ENCODE measurements at regions of chr11 and their contacts with region 1.

Region 1: GRCh38 chr11:10455637-10456487 is 798 bp downstream of the AMPD3 start:
- DNase-seq: peak; percentile 92
- H3K4me3 Mint-ChIP-seq: peak overlapping the region; percentile 96
- H3K27ac Mint-ChIP-seq: peak overlapping the region; percentile 94
- H3K4me1 Mint-ChIP-seq: peaks cover 69% of the 10 kb centered on the region
- H3K27me3 Mint-ChIP-seq: peaks cover 8% of the 10 kb centered on the region

Region 2: GRCh38 chr11:9601037-9601875 is 854.6 kb before region 1 on chr11:
- intact Hi-C with region 1: loop called (anchors 5 kb)
- DNase-seq: peak; percentile 92
- H3K4me3 Mint-ChIP-seq: peak overlapping the region; percentile 83
- H3K27ac Mint-ChIP-seq: peak overlapping the region; percentile 88
- H3K4me1 Mint-ChIP-seq: peaks cover 30% of the 10 kb centered on the region
- H3K27me3 Mint-ChIP-seq: peaks cover 7% of the 10 kb centered on the region

Region 3: GRCh38 chr11:10293423-10294289 is 162.2 kb before region 1 on chr11 and contains the start of gene SBF2:
- intact Hi-C with region 1: loop called (anchors 5 kb)
- DNase-seq: peak; percentile 93
- H3K4me3 Mint-ChIP-seq: peak within 1 kb of the TSS; percentile 82
- H3K27ac Mint-ChIP-seq: peak within 1 kb of the TSS; percentile 76
- H3K4me1 Mint-ChIP-seq: peaks cover 33% of the 10 kb centered on the region
- H3K27me3 Mint-ChIP-seq: peaks cover 51% of the 10 kb centered on the region
- total RNA-seq, gene SBF2: 7.1 and 9.1 TPM in 2 replicates

Region 4: GRCh38 chr11:10441652-10442503 is 14.0 kb before region 1 on chr11:
- intact Hi-C with region 1: loop called (anchors 1 kb)
- DNase-seq: peak; percentile 78
- H3K4me3 Mint-ChIP-seq: peak overlapping the region; percentile 51
- H3K27ac Mint-ChIP-seq: peak overlapping the region; percentile 73
- H3K4me1 Mint-ChIP-seq: peaks cover 28% of the 10 kb centered on the region
- H3K27me3 Mint-ChIP-seq: peaks cover 16% of the 10 kb centered on the region

Region 5: DNA sequence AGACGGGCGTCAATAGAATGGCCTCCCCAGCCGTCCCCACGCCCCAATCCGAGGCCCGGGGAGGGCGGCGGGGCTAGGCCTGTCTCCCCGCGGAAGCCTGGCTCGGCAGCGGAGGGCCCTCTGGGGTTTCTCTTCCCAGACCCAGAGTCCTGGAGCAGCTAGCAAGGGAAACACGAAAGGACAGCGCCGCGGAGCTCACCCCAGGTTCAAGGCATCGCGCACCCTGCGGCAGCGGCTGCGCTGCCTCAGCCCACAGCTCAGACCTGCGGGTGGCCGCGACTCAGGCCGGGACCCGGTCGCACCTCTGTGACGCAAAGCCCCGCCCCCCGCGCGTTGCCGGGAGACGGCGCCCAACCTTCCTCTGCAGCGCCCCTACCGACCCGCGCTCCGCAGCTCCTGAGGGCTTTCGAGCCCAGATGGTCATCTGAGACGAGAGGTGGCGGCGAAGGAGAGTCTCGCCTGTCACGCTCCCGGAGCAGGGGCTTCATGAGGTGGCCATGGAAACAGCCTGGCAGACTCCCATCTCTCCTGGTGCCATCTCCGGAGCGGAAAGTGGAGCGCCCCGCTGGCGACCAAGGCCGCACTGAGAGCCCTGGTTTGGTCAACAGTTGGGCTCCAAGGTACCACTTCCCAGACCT is 85.2 kb after region 1 on chr11 and contains the start of gene RNF141:
- intact Hi-C with region 1: loop called (anchors 2 kb)
- DNase-seq: peak; percentile 99
- H3K4me3 Mint-ChIP-seq: peak within 1 kb of the TSS; percentile 92
- H3K27ac Mint-ChIP-seq: peak within 1 kb of the TSS; percentile 78
- H3K4me1 Mint-ChIP-seq: peaks cover 14% of the 10 kb centered on the region
- H3K27me3 Mint-ChIP-seq: peaks cover 3% of the 10 kb centered on the region
- total RNA-seq, gene RNF141: 14.3 and 15.4 TPM in 2 replicates

Region 6: DNA sequence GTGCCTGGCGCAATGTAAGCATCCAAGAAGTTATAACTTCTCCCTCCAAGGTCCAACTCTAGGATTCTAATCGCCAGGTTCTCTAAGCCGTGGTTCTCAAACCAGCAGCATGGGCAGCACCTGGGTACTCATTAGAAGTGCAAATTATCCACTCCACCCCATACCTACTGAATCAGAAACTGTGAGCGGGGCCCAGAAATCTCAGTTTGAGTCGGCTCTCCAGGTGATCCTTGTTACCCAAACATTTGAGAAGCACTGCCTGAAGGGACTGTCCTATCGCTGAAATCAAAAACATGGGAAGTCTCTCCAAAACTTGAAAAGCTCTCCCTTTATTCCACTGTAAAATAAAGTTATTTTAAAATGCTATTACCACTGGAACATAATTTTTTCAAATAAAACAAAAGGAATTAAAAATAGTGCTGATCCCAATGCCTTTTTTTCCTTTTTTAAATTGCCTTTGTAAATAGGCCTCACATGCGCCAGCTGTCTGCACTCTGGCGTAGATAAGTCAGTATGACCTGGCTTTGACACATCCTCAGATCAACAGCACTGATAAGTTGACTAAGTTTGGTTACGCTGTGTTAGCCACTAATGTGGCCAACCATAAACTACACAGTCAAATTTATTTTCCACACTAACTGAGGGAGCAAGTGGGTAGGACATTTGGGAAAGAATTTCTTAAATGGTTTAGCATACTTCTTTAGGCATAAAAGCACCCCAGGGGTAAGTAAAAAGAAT is 286.8 kb after region 1 on chr11:
- intact Hi-C with region 1: loop called (anchors 2 kb)
- DNase-seq: peak; percentile 73
- H3K4me3 Mint-ChIP-seq: peak overlapping the region; percentile 66
- H3K27ac Mint-ChIP-seq: peak overlapping the region; percentile 49
- H3K4me1 Mint-ChIP-seq: peaks cover 22% of the 10 kb centered on the region
- H3K27me3 Mint-ChIP-seq: peaks cover 2% of the 10 kb centered on the region

Region 7: DNA sequence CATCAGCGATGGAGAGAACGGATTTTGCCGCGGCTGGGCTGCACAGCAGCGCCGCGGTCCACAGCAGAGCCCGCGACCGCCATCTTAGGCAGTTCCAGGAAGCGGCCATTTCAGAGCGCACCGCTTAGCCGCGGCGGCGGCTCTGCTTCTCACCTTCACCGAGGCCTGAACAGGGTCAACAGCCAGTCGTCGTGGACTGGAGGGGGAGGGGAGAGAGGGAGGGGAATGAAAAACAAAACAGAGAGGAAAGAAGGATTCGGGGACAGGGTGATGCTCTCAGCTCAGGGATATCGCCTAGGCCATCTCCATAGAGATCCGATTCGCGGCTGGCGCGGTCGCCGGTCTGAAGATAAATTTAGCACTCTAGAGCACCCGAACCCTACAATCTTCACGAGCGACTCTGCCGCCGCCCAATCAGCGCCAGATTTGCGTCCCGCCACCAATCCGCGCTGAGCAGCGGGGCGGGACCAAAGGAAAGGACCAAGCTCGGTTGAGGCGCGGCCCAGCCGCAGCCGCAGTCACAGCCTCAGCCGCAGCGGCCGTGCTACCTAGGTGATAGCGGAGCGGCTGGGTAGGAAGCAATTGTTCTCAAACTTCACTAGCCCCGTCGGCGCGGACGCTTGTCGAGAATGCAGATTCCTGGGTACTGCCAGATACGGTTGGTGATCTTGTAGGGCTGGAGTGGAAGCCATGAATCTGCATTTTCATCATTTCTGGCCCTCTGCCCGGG is 402.0 kb after region 1 on chr11 and contains the start of gene ZBED5:
- intact Hi-C with region 1: loop called (anchors 5 kb)
- DNase-seq: peak; percentile 99
- H3K4me3 Mint-ChIP-seq: peak within 1 kb of the TSS; percentile 100
- H3K27ac Mint-ChIP-seq: peak within 1 kb of the TSS; percentile 100
- H3K4me1 Mint-ChIP-seq: peaks cover 35% of the 10 kb centered on the region
- H3K27me3 Mint-ChIP-seq: no peaks in the 10 kb centered on the region
- total RNA-seq, gene ZBED5: 41.8 and 43.1 TPM in 2 replicates

Measured in activated CD4-positive, alpha-beta T cell treated with anti-CD3 and anti-CD28 coated beads, Interleukin-2, amount 10 ng/mL, durations not matched to agents 24 days and 14 days (primary cell).